ENCODE measurements at regions of chr11 and their contacts with region 1.

Region 1: GRCh38 chr11:120108154-120108865 is 29.6 kb downstream of the TRIM29 start:
- DNase-seq: peak; percentile 82
- ATAC-seq: peak; percentile 92

Region 2: GRCh38 chr11:119481021-119481666 is 627.2 kb before region 1 on chr11:
- intact Hi-C with region 1: loop called (anchors 5 kb)
- DNase-seq: peak; percentile 87
- ATAC-seq: peak; percentile 90

Region 3: DNA sequence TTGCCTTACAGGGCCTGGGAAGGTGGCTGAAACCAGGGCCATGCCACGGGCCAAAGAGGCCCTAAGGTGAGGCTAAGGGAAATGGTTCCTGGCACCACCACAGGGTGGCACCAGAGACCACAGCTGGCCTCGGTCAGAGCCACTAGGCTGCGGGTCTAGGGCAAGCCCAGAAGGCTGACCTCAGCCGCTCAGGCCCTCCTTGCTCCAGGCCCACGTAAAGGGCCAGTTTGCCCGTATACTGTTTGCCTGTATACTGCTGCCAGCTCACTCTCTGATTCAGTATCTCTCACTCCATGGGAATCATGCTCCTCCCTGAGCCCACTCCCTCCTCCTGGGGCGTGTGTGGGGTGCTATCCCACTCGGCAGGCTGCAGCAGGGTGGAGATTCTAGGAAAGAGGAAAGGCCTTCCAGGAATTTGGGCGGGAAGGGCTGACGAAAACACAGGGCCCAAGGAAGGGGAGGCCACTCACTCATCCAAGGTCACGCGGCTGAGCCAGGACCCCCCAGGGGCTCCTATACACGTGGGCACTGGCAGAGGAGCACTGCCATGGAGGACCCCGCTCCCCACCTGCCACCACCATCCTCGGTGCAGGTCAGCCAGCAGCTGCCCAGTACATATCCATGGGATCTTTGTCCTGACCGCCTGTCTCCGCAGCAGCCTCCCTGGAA is 441.7 kb before region 1 on chr11:
- intact Hi-C with region 1: loop called (anchors 5 kb)
- DNase-seq: peak; percentile 89
- ATAC-seq: peak; percentile 95

Region 4: GRCh38 chr11:120013325-120014270 is 94.7 kb before region 1 on chr11:
- intact Hi-C with region 1: loop called (anchors 5 kb)
- DNase-seq: peak; percentile 71
- ATAC-seq: peak; percentile 85

Region 5: GRCh38 chr11:120068114-120068573 is 40.2 kb before region 1 on chr11:
- intact Hi-C with region 1: no loop called
- DNase-seq: no peak
- ATAC-seq: no peak